A673 (cell line): ENCODE measurements at regions of chr1 and their contacts with region 1.

Region 1: GRCh38 chr1:33094971-33095604 is 14.1 kb downstream of the AZIN2 start:
- DNase-seq: peak; percentile 74
- H3K4me3 ChIP-seq: no peak overlapping the region
- H3K27ac ChIP-seq: no peak overlapping the region
- H3K4me1 ChIP-seq: no peaks in the 10 kb centered on the region
- H3K27me3 ChIP-seq: no peaks in the 10 kb centered on the region
- CTCF ChIP-seq: peak; percentile 97

Region 2: DNA sequence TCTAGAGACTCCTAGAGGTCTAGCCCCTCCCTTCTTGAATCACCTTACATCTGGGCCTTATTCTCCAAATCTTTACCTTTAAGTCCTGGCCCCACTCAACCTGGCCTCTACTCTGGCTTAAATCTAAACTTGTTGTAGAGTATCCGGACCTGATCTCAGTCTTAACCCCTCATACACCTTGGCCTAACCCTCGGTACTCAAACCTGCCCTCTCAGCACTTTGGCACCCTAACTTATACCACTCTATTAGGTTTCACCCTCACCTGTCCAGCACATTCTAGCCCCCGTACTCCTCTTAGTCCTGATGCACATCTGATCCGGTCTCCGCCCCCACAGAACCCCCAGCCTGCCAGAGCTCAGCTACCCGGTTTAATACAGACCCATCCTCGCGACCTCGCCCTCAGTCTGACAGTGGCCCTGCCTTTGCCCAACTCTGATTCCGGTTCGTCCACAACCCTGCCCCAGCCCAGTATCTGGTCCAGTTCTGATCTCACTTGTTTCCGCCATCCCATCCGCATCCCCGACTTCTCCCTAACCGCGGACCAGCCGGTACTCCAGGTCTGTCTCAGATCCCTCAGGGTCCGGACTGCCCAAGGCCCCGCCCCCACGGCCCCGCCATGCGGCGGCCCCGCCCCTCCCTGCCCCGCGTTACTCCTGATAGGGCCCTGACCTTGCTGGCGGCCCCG is 85.3 kb after region 1 on chr1:
- CTCF ChIA-PET with region 1: interaction called, 14 read pairs
- POLR2A ChIA-PET with region 1: no interaction called
- intact Hi-C with region 1: no loop called
- DNase-seq: peak; percentile 87
- H3K4me3 ChIP-seq: peak overlapping the region; percentile 56
- H3K27ac ChIP-seq: no peak overlapping the region
- H3K4me1 ChIP-seq: peaks cover 15% of the 10 kb centered on the region
- H3K27me3 ChIP-seq: no peaks in the 10 kb centered on the region
- CTCF ChIP-seq: no peak

Region 3: DNA sequence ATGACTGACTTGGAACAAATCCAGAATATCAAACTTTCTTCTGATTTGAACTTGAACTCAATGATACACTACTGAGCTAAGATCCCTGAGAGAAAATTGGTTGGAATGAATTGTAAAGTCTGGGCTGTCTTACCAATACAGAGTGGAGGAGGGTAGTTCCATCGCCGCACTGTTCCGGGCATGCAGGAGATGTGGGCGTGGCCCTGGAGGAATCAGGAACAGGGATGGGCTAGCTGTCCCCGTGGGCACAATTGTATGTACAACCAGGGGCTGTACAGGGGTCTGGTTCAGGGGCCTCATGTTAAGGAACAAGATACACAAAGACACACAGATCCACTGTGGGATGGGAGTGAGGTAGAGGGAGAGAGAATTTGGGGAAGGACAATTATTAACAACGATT is 521.7 kb after region 1 on chr1:
- CTCF ChIA-PET with region 1: no interaction called
- POLR2A ChIA-PET with region 1: no interaction called
- intact Hi-C with region 1: loop called (anchors 2 kb)
- DNase-seq: no peak
- H3K4me3 ChIP-seq: no peak overlapping the region
- H3K27ac ChIP-seq: no peak overlapping the region
- H3K4me1 ChIP-seq: peaks cover 2% of the 10 kb centered on the region
- H3K27me3 ChIP-seq: no peaks in the 10 kb centered on the region
- CTCF ChIP-seq: no peak